A549 (cell line): ENCODE measurements at regions of chr2 and their contacts with region 1.

Region 1: DNA sequence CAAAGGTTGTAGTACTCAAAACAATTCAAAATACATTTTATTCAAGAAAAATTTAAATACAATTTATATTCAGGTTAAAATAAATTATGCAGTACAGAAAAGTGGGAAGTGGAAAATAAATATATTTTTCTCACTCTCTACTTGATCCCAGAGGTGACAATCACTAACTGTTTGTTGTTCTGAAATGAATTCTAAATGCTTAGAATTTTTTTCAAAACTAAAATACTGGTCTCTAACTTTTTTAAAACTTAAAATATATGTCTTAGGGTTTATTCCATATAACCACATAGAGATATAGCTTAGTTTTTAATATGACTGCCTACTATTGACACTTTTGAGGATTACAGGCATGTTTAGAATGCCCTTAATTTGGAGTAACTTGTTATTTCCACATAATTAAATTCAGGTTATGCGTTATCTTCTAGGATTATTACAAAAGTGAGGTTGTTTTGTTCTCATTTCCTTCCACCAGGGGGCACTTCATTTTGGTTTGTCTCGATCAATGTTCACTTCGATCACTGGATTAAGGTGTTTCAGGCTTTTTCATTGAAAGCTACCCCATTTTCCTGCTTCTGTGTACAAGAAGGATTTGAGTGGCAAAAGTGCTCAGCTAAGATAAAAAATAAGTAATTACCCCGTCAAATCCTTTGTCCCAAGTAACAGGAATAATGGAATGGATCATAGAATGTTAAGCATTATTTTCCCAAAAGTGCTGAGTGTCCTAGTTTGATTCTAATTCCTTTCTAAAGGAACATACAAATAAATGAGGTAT is 27.1 kb upstream of the TFPI start:
- DNase-seq: peak; percentile 4 to 62
- ATAC-seq: peak in 1 of 2 experiments; percentile 46; a peak in 3 of 6 replicates
- H3K4me3 ChIP-seq: peak overlapping the region; percentile 6; the same call in 1 of the 3 replicates
- H3K27ac ChIP-seq: peak overlapping the region; percentile 69 to 72; a peak in 5 of 6 replicates
- H3K4me1 ChIP-seq: peaks cover 25% of the 10 kb centered on the region
- CTCF ChIP-seq: peak; percentile 80
- EP300 ChIP-seq: no peak
- POLR2A ChIP-seq: no peak
- RAD21 ChIP-seq: peak; percentile 51 to 61

Region 2: GRCh38 chr2:187493877-187494568 is 87.3 kb before region 1 on chr2:
- CTCF ChIA-PET with region 1: interaction called, 324 read pairs
- POLR2A ChIA-PET with region 1: no interaction called
- DNase-seq: no peak
- ATAC-seq: no peak
- H3K4me3 ChIP-seq: no peak overlapping the region
- H3K27ac ChIP-seq: no peak overlapping the region
- H3K4me1 ChIP-seq: no peaks in the 10 kb centered on the region; the same call in 2 of the 3 replicates
- CTCF ChIP-seq: no peak
- EP300 ChIP-seq: no peak
- POLR2A ChIP-seq: no peak
- RAD21 ChIP-seq: no peak

Region 3: DNA sequence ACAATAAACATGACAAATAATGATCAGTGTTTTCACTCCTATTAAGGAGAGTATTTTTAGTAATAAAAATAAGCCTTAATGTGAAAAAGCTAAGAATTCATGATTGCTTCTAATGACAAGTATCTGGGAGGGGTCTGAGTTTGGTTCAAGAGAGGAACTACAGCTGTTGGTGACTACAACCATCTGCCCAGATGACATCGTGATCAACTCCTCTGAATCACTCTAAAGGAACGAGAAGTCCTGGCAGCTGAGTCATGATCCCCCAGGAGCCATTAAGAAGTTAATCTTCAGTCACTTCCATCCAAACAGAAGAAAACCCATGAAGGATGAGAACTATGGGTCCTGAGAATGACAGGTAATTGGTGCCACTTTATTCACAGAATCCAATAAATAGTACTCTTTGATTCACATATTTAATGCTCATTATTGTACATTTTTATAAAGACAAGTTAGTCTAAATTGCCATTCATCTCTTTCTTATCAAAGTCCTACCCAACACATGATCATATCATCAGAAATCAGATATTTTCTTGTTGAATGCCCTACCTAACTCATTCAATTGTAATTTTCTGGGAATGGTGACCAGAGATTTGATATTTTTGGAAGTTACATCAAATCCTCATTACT is 33.8 kb before region 1 on chr2:
- CTCF ChIA-PET with region 1: interaction called, 27 read pairs
- POLR2A ChIA-PET with region 1: interaction called, 9 read pairs
- DNase-seq: peak; percentile 18 to 96
- ATAC-seq: peak; percentile 87 to 97
- H3K4me3 ChIP-seq: no peak overlapping the region
- H3K27ac ChIP-seq: peak overlapping the region; percentile 89 to 92
- H3K4me1 ChIP-seq: peaks cover 86% of the 10 kb centered on the region
- CTCF ChIP-seq: no peak
- EP300 ChIP-seq: peak; percentile 56 to 76; a peak in 2 of 5 replicates
- POLR2A ChIP-seq: no peak
- RAD21 ChIP-seq: peak in 1 of 2 experiments; percentile 31; a peak in 2 of 5 replicates

Region 4: GRCh38 chr2:187554011-187554703 is 27.2 kb before region 1 on chr2 and contains the start of gene TFPI:
- CTCF ChIA-PET with region 1: interaction called, 27 read pairs
- POLR2A ChIA-PET with region 1: no interaction called
- DNase-seq: peak in 1 of 2 experiments; percentile 70
- ATAC-seq: peak; percentile 79 to 80
- H3K4me3 ChIP-seq: peak within 1 kb of the TSS; percentile 66
- H3K27ac ChIP-seq: peak within 1 kb of the TSS; percentile 89 to 92
- H3K4me1 ChIP-seq: peaks cover 46% of the 10 kb centered on the region
- CTCF ChIP-seq: no peak
- EP300 ChIP-seq: no peak
- POLR2A ChIP-seq: no peak
- RAD21 ChIP-seq: no peak; a peak in 1 of 5 replicates
- polyA plus RNA-seq, gene TFPI: 104 and 107 TPM in 2 replicates

Region 5: DNA sequence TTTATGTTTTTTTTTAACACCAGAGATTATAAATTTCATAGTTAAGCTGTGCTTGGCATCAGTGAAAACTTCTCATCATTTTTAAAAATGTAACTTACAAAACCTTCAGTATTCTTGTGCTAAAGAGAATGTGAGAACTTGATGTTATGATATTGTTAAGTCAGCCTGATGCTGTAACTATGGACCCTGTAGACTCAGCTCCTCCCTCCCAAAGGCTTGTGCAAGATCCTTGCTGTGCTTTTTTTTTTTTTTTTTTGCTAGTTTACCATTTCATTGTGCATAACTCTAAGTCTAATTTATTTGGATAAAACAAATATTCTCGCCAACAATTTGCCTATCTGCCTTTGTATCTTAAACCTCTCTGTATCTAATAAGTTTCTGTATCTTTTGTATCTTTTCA is 14.2 kb before region 1 on chr2:
- CTCF ChIA-PET with region 1: interaction called, 18 read pairs
- POLR2A ChIA-PET with region 1: no interaction called
- DNase-seq: no peak
- ATAC-seq: peak; percentile 82 to 83; a peak in 5 of 6 replicates
- H3K4me3 ChIP-seq: no peak overlapping the region
- H3K27ac ChIP-seq: peak overlapping the region in 1 of 2 experiments; percentile 40; a peak in 1 of 6 replicates
- H3K4me1 ChIP-seq: peaks cover 38% of the 10 kb centered on the region
- CTCF ChIP-seq: no peak
- EP300 ChIP-seq: no peak
- POLR2A ChIP-seq: no peak
- RAD21 ChIP-seq: no peak

Region 6: GRCh38 chr2:187594801-187595200 is 13.5 kb after region 1 on chr2:
- CTCF ChIA-PET with region 1: interaction called, 10 read pairs
- POLR2A ChIA-PET with region 1: no interaction called
- DNase-seq: no peak
- ATAC-seq: no peak
- H3K4me3 ChIP-seq: no peak overlapping the region
- H3K27ac ChIP-seq: no peak overlapping the region
- H3K4me1 ChIP-seq: no peaks in the 10 kb centered on the region
- CTCF ChIP-seq: peak; percentile 40; the same call in 1 of the 3 replicates
- EP300 ChIP-seq: no peak
- POLR2A ChIP-seq: no peak
- RAD21 ChIP-seq: peak; percentile 49 to 69

Region 7: GRCh38 chr2:187644981-187645380 is 63.7 kb after region 1 on chr2:
- CTCF ChIA-PET with region 1: no interaction called
- POLR2A ChIA-PET with region 1: no interaction called
- DNase-seq: no peak
- ATAC-seq: no peak
- H3K4me3 ChIP-seq: no peak overlapping the region
- H3K27ac ChIP-seq: no peak overlapping the region
- H3K4me1 ChIP-seq: peaks cover 4% of the 10 kb centered on the region; the same call in 1 of the 3 replicates
- CTCF ChIP-seq: no peak
- EP300 ChIP-seq: no peak
- POLR2A ChIP-seq: no peak
- RAD21 ChIP-seq: no peak

Region 8: DNA sequence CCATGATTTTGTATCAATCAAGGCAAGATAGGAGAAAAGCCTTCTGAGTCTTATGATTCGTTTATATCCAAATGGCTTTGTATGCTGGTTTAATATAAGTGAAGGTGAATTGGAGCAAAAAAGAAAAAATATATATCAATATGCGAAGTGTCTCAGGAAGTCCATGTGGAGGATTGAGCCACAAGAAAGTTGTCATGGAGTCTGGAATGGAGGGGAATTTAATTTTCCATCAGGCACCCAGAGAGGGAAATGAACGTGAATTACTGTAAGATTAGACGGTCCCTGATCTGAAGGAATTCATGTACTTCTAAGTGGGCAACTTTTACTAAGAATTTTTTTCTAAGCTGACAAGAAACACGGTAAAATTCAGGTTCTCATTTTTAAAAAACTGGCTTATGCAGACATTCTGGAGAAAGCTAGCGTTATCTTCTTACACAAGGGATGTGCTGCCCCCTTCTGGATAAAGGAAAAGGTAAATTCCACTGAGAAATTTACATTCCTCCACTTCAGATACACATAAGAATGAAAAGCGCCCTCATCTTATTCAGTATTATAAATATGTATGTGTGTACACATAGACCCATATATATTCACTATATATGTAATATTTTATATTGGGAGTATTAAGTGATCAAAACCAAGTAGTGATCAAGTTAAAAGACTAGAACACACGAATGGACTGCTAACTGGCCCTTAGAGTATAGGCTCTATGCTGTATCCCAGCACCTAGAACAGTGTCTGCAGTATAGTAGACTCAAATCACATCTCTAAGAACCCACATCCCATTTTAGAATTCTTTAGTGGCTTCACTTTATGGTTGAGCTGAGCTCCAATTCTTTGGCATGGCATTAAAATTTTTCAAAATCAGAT is 261.9 kb after region 1 on chr2:
- CTCF ChIA-PET with region 1: interaction called, 33 read pairs
- POLR2A ChIA-PET with region 1: no interaction called
- DNase-seq: peak; percentile 15 to 79
- ATAC-seq: peak; percentile 80 to 92
- H3K4me3 ChIP-seq: no peak overlapping the region
- H3K27ac ChIP-seq: no peak overlapping the region
- H3K4me1 ChIP-seq: no peaks in the 10 kb centered on the region
- CTCF ChIP-seq: peak; percentile 90
- EP300 ChIP-seq: no peak
- POLR2A ChIP-seq: no peak
- RAD21 ChIP-seq: peak; percentile 85 to 88